ENCODE measurements at regions of chr5 and their contacts with region 1.

Region 1: GRCh38 chr5:123119334-123119986 is 30.4 kb downstream of the PRDM6 start:
- DNase-seq: peak; percentile 74
- ATAC-seq: peak; percentile 88
- H3K4me3 ChIP-seq: peak overlapping the region; percentile 23; the same call in 1 of the 2 replicates
- H3K27ac ChIP-seq: peak overlapping the region; percentile 88
- H3K4me1 ChIP-seq: peaks cover 15% of the 10 kb centered on the region
- H3K27me3 ChIP-seq: no peaks in the 10 kb centered on the region
- CTCF ChIP-seq: peak; percentile 31; the same call in 1 of the 2 replicates
- POLR2A ChIP-seq: no peak
- RAD21 ChIP-seq: peak; percentile 16; the same call in 1 of the 2 replicates

Region 2: DNA sequence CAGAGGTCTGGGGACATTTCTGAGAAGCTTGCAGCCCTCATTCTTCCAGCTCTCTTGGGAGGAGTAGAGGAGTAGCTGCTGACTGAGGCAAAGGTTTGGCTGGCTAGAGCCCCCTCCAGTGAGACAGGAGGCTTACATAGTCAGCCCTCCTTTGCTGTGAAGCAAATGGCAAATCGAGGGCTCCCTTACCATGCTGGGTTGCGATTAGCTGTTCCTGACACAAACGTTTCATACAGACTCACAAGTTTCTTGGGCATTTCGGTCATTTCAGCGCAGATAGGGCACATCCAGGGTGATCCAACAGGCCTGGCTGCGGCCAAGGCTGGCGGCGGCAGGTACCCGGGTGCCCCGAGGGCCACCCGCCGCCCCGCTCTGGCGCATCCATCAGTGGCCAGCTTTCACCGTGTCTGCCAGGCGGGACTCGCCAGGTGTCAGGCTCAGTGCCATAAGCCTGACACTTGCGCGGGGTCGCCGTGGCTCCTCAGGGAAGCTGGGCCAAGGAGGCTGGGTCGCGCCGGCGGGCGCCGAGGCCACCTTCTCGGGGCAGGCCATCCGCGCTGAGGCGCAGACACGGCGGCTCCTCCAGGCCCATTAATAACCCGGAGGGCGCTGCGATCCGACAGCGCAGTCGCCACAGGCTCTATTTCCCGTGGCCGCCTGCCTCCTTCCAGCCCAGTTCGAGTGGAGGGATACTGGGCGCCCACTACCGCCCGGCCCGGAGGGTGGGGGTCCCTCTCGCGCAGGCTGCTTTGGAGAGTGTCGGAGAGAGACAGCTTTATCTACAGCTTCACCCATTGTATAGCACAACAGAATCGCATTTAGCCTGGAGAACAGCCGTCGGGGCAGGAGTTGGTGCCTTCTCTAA is 21.4 kb before region 1 on chr5:
- CTCF ChIA-PET with region 1: no interaction called
- POLR2A ChIA-PET with region 1: no interaction called
- dilution Hi-C with region 1: no loop called
- in situ Hi-C with region 1: no loop called
- intact Hi-C with region 1: loop called (anchors 2 kb)
- DNase-seq: no peak
- ATAC-seq: no peak
- H3K4me3 ChIP-seq: no peak overlapping the region
- H3K27ac ChIP-seq: no peak overlapping the region
- H3K4me1 ChIP-seq: peaks cover 7% of the 10 kb centered on the region; the same call in 1 of the 2 replicates
- H3K27me3 ChIP-seq: peaks cover 25% of the 10 kb centered on the region
- CTCF ChIP-seq: no peak
- POLR2A ChIP-seq: no peak
- RAD21 ChIP-seq: no peak

Region 3: GRCh38 chr5:123285122-123286023 is 165.9 kb after region 1 on chr5:
- CTCF ChIA-PET with region 1: no interaction called
- POLR2A ChIA-PET with region 1: no interaction called
- dilution Hi-C with region 1: no loop called
- in situ Hi-C with region 1: no loop called
- intact Hi-C with region 1: loop called (anchors 5 kb)
- DNase-seq: peak; percentile 61
- ATAC-seq: peak; percentile 87
- H3K4me3 ChIP-seq: peak overlapping the region; percentile 18
- H3K27ac ChIP-seq: no peak overlapping the region
- H3K4me1 ChIP-seq: no peaks in the 10 kb centered on the region
- H3K27me3 ChIP-seq: peaks cover 5% of the 10 kb centered on the region
- CTCF ChIP-seq: no peak
- POLR2A ChIP-seq: no peak
- RAD21 ChIP-seq: no peak